CD14-positive monocyte (primary cell): ENCODE measurements at regions of chr9 and their contacts with region 1.

Region 1: DNA sequence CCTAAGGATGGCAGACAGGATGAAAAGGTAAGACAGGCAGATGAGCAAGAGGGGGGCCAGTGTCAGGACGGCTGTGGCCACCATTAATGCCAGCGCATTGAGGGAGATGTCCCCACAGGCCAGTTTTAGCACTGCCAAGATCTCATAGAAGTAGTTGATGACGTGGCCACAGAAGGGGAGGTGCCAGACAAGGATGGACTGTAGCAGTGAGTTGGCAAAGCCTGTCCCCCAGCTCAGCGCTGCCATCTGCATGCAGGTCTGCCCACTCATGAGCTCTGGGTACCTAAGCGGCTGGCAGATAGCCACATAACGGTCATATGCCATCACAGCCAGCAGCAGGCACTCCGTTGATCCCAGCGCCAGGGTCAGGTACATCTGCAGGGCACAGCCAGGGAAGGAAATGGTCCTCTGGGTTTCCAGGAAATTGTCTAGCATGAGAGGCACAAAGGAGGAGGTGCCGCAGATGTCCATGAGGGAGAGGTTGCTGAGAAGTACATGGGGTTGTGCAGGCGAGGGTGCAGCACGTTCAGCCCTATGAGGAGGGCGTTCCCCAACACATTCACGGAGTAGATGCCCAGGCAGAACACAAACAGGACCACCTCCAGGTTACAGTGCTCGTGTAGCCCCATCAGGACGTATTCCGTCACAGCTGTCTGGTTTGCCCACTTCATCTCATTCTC is 10.8 kb downstream of the OR13J1 start:
- DNase-seq: peak; percentile 65 to 77 (median 68)
- H3K4me3 ChIP-seq: no peak overlapping the region
- H3K4me3 Mint-ChIP-seq: peak overlapping the region in 1 of 2 donors; percentile 61
- H3K27ac ChIP-seq: no peak overlapping the region
- H3K27ac Mint-ChIP-seq: peak overlapping the region in 2 of 7 donors; percentile 41 to 75
- H3K4me1 ChIP-seq: peaks cover 4 to 19% of the 10 kb centered on the region in 2 donors
- H3K4me1 Mint-ChIP-seq: peaks cover 22% of the 10 kb centered on the region
- H3K27me3 ChIP-seq: peaks cover 8 to 53% of the 10 kb centered on the region in 2 donors
- H3K27me3 Mint-ChIP-seq: peaks cover 41 to 65% (median 43%) of the 10 kb centered on the region in 3 donors
- CTCF ChIP-seq: peak; percentile 34

Region 2: DNA sequence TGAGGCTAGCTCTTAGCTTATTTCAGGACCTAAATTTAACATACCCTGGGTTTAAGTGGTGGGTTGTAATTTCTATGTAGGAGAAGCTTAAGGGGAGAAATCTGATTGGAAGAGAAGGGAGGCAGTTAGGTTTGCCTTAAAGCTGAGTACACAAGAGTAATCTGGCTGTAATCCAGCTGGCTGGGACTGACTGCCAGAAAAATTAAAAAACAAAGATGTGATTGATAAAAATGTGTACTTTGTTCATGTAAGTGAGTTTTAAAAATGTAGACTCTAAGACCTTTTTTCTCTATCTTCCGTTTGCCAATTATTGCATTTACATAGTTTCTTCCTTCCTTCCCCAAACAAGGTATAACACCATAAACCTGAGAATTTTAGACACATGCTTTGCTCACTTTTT is 87.9 kb before region 1 on chr9:
- intact Hi-C with region 1: no loop called
- DNase-seq: no peak
- H3K4me3 ChIP-seq: no peak overlapping the region
- H3K4me3 Mint-ChIP-seq: no peak overlapping the region
- H3K27ac ChIP-seq: no peak overlapping the region
- H3K27ac Mint-ChIP-seq: no peak overlapping the region
- H3K4me1 ChIP-seq: peaks cover 15 to 16% of the 10 kb centered on the region in 2 donors
- H3K4me1 Mint-ChIP-seq: peaks cover 16% of the 10 kb centered on the region
- H3K27me3 ChIP-seq: no peaks in the 10 kb centered on the region
- H3K27me3 Mint-ChIP-seq: peaks cover 0 to 2% (median 1%) of the 10 kb centered on the region in 3 donors
- CTCF ChIP-seq: no peak

Region 3: GRCh38 chr9:35910613-35911359 is 51.3 kb after region 1 on chr9:
- intact Hi-C with region 1: loop called in 1 of 2 experiments (anchors 10 kb)
- DNase-seq: no peak
- H3K4me3 ChIP-seq: no peak overlapping the region
- H3K4me3 Mint-ChIP-seq: no peak overlapping the region
- H3K27ac ChIP-seq: no peak overlapping the region
- H3K27ac Mint-ChIP-seq: peak overlapping the region in 1 of 7 donors; percentile 8
- H3K4me1 ChIP-seq: peaks cover 35% of the 10 kb centered on the region in 2 donors
- H3K4me1 Mint-ChIP-seq: peaks cover 38% of the 10 kb centered on the region
- H3K27me3 ChIP-seq: no peaks in the 10 kb centered on the region
- H3K27me3 Mint-ChIP-seq: peaks cover 0 to 5% (median 0%) of the 10 kb centered on the region in 3 donors
- CTCF ChIP-seq: peak; percentile 36